CD14-positive monocyte (primary cell): ENCODE measurements at regions of chr6 and their contacts with region 1.

Region 1: DNA sequence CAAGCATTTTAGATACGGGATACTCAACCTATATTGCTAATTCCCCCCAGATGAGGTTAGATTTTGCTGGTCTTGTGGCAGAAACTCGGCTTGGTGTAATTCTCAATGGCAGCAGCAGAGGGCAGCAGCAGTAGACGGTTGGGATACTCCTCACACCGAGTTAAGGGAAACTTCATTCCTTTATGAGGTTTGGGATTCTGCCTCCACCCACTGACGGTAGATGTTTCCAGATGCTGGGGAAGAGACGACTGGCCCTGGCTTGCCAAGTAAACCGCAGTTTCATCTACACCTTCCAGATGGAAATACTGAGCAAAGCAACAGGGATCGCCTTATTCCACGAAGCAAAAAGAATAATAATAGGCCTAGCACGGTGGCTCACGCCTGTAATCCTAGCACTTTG is 8.2 kb upstream of the TBC1D7 start:
- DNase-seq: peak; percentile 55 to 68 (median 66)
- H3K4me3 ChIP-seq: no peak overlapping the region
- H3K4me3 Mint-ChIP-seq: no peak overlapping the region
- H3K27ac ChIP-seq: no peak overlapping the region
- H3K27ac Mint-ChIP-seq: peak overlapping the region in 3 of 7 donors; percentile 31 to 73 (median 35)
- H3K4me1 ChIP-seq: peaks cover 37 to 43% of the 10 kb centered on the region in 2 donors
- H3K4me1 Mint-ChIP-seq: peaks cover 42% of the 10 kb centered on the region
- H3K27me3 ChIP-seq: no peaks in the 10 kb centered on the region
- H3K27me3 Mint-ChIP-seq: peaks cover 0 to 1% (median 0%) of the 10 kb centered on the region in 3 donors
- CTCF ChIP-seq: peak; percentile 94

Region 2: DNA sequence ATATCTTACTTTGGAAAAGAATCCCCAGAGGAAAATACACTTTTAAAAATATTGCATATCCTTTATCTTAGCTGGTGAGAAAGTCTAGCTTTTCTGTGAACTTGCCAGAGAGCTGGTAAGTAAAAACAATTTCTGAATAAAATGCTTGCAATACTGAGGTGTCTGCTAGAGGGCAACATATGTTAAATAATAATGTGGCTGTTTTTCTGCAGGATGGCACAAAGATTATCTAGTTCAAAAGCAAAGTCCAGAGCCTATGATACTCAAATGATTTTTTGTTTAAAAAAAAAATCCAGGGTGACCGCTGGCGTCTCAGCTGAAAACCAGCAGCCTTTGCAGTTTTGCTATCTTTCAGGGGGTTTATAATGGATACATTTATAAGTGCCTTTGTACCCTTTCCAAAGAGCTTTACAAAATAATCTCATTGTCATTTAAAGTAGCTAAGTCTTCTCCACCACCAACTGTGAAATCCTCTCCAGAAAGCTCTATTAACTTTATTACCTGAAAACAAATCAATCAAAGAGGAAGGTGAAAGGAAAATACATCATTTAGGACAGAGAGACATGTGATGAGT is 425.1 kb before region 1 on chr6:
- intact Hi-C with region 1: loop called in 1 of 2 experiments (anchors 10 kb)
- DNase-seq: peak in 2 of 3 donors; percentile 9 to 34
- H3K4me3 ChIP-seq: no peak overlapping the region
- H3K4me3 Mint-ChIP-seq: no peak overlapping the region
- H3K27ac ChIP-seq: no peak overlapping the region
- H3K27ac Mint-ChIP-seq: no peak overlapping the region
- H3K4me1 ChIP-seq: peaks cover 11 to 16% of the 10 kb centered on the region in 2 donors
- H3K4me1 Mint-ChIP-seq: peaks cover 19% of the 10 kb centered on the region
- H3K27me3 ChIP-seq: no peaks in the 10 kb centered on the region
- H3K27me3 Mint-ChIP-seq: peaks cover 0 to 3% (median 0%) of the 10 kb centered on the region in 3 donors
- CTCF ChIP-seq: peak; percentile 54

Region 3: GRCh38 chr6:13375360-13375878 is 38.9 kb after region 1 on chr6:
- intact Hi-C with region 1: loop called in 1 of 2 experiments (anchors 5 kb)
- DNase-seq: no peak
- H3K4me3 ChIP-seq: no peak overlapping the region
- H3K4me3 Mint-ChIP-seq: no peak overlapping the region
- H3K27ac ChIP-seq: no peak overlapping the region
- H3K27ac Mint-ChIP-seq: no peak overlapping the region
- H3K4me1 ChIP-seq: peaks cover 6 to 14% of the 10 kb centered on the region in 2 donors
- H3K4me1 Mint-ChIP-seq: peaks cover 30% of the 10 kb centered on the region
- H3K27me3 ChIP-seq: no peaks in the 10 kb centered on the region
- H3K27me3 Mint-ChIP-seq: peaks cover 0 to 2% (median 1%) of the 10 kb centered on the region in 3 donors
- CTCF ChIP-seq: no peak

Region 4: GRCh38 chr6:13413900-13414555 is 77.5 kb after region 1 on chr6:
- intact Hi-C with region 1: no loop called
- DNase-seq: peak in 2 of 3 donors; percentile 43 to 50
- H3K4me3 ChIP-seq: no peak overlapping the region
- H3K4me3 Mint-ChIP-seq: no peak overlapping the region
- H3K27ac ChIP-seq: peak overlapping the region in 1 of 2 donors; percentile 63
- H3K27ac Mint-ChIP-seq: peak overlapping the region in 4 of 7 donors; percentile 26 to 74 (median 48)
- H3K4me1 ChIP-seq: peaks cover 34 to 41% of the 10 kb centered on the region in 2 donors
- H3K4me1 Mint-ChIP-seq: peaks cover 42% of the 10 kb centered on the region
- H3K27me3 ChIP-seq: no peaks in the 10 kb centered on the region
- H3K27me3 Mint-ChIP-seq: peaks cover 0 to 7% (median 2%) of the 10 kb centered on the region in 3 donors
- CTCF ChIP-seq: no peak

Region 5: DNA sequence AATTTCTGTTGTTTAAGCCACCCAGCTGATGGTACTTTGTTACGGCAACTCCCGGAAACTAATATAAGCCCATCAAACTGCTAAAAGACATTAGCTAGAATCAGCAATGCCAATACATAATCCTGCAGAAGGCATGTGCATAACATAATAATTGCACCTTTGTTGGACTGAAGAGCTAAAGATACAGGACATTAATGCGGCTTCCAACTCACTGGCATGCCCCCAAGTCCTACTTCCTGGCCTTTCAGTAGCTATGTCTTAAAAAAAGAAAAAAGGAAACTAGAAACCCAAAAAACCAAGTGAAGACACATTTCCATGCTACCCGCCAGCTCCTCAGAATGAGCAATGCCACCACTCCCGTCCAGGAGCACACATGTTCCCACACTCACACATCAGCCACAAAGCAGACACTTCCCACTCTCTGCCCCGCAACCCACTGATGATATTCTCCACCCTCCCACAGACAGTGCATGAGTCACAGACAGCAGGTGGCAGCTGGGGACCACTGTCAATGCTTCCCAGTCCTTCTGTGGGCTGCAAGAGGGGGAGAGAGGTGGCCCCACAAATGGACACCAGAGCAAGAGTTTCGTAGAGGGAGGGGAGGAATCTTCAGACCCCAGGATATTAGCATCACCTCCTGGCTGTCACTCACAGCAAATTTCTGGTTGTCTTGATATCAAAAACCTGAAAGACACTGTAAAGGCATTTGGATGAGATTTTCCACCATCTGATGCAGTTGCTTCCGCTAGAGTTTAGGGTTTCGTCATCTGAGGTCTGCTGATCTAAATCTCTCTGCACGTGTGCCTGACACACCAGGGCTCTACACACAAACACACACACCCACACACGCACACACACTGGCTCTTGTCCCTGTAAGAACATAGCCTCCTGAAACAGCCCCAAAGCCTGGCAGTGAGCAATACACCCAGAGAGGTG is 118.0 kb after region 1 on chr6:
- intact Hi-C with region 1: loop called in 1 of 2 experiments (anchors 10 kb)
- DNase-seq: peak; percentile 89 to 95 (median 94)
- H3K4me3 ChIP-seq: peak overlapping the region in 1 of 3 experiments; percentile 11
- H3K4me3 Mint-ChIP-seq: peak overlapping the region; percentile 61 to 72
- H3K27ac ChIP-seq: peak overlapping the region; percentile 71 to 83
- H3K27ac Mint-ChIP-seq: peak overlapping the region; percentile 89 to 99 (median 92)
- H3K4me1 ChIP-seq: peaks cover 19 to 20% of the 10 kb centered on the region in 2 donors
- H3K4me1 Mint-ChIP-seq: peaks cover 23% of the 10 kb centered on the region
- H3K27me3 ChIP-seq: no peaks in the 10 kb centered on the region
- H3K27me3 Mint-ChIP-seq: peaks cover 2% of the 10 kb centered on the region in 3 donors
- CTCF ChIP-seq: no peak

Region 6: DNA sequence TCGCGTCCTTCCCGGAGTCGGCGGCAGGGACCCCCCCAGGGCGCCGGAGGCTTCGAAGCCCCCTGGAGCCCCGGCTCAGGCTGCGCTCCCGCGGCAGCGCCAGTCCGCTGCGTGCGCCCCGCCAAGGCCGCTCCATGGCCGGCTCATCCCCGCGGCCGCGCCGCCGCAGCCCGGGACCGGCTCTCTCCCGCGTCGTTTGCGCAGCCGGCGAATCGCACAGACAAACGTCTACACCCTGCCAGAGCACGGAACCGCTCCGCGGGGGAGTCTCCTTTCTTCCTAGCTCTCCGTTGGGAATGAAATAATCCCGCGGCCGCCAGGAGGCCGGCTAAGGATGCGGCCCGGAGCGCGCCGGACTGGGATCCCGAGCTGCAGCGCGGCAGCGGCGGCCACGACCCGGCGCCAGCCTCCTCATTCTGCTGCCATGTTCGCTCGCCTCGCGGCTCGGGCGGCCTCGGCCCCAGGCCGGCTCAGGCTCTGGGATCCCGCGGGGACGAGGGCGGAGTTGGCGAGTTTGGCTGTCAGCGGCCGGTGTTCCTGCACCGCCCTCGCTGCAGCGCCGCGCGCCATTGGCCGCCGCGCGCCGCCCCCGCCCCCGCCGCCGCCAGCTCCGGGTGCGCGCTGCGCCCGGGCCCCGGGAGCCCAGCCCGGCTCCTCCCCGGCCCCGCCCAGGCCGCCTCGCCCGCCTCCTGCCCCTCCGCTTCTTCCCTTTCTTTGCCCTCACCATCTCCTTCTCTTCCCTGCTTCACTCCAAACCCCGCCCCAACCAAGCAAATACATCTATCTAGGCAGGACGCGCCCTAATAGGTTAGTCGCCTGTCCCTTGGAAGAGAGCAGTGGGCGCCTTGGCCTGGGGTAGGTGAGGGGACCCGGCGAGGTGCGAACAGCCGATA is 150.8 kb after region 1 on chr6 and contains the start of gene GFOD1:
- intact Hi-C with region 1: no loop called
- DNase-seq: peak; percentile 72 to 79 (median 77)
- H3K4me3 ChIP-seq: peak within 1 kb of the TSS; percentile 61 to 92 (median 64)
- H3K4me3 Mint-ChIP-seq: peak within 1 kb of the TSS; percentile 98 to 99
- H3K27ac ChIP-seq: peak within 1 kb of the TSS; percentile 75 to 86
- H3K27ac Mint-ChIP-seq: peak within 1 kb of the TSS; percentile 46 to 92 (median 86)
- H3K4me1 ChIP-seq: peaks cover 27 to 44% of the 10 kb centered on the region in 2 donors
- H3K4me1 Mint-ChIP-seq: peaks cover 47% of the 10 kb centered on the region
- H3K27me3 ChIP-seq: peaks cover 0 to 7% of the 10 kb centered on the region in 2 donors
- H3K27me3 Mint-ChIP-seq: peaks cover 3 to 14% (median 14%) of the 10 kb centered on the region in 3 donors
- CTCF ChIP-seq: peak; percentile 17
- polyA plus RNA-seq, gene GFOD1: 2.4 to 8.7 (median 2.4) TPM

Region 7: DNA sequence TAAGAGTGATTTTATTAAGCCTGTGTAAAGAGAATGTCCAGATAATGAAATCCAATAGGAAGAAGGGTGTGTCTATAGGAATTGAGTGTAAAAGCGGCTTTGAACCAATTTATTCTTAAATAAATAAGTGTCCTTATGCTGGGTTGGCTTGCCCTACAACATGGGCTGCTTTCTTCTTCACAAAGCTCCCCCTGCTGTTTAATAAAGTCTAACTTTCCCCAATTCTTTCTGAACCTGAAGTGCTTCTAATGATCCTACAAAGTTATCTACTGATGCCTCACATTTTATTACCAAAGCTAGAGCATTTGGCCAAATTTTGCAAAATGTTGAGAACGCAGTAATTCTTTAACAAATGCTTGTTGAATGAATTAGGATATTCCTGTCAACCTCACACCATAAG is 201.5 kb after region 1 on chr6:
- intact Hi-C with region 1: loop called (anchors 5 to 10 kb)
- DNase-seq: peak; percentile 21 to 49 (median 39)
- H3K4me3 ChIP-seq: no peak overlapping the region
- H3K4me3 Mint-ChIP-seq: no peak overlapping the region
- H3K27ac ChIP-seq: no peak overlapping the region
- H3K27ac Mint-ChIP-seq: no peak overlapping the region
- H3K4me1 ChIP-seq: no peaks in the 10 kb centered on the region
- H3K4me1 Mint-ChIP-seq: no peaks in the 10 kb centered on the region
- H3K27me3 ChIP-seq: no peaks in the 10 kb centered on the region
- H3K27me3 Mint-ChIP-seq: peaks cover 0 to 4% (median 3%) of the 10 kb centered on the region in 3 donors
- CTCF ChIP-seq: peak; percentile 37

Region 8: GRCh38 chr6:13574149-13574570 is 237.6 kb after region 1 on chr6:
- intact Hi-C with region 1: loop called (anchors 5 kb)
- DNase-seq: peak; percentile 85 to 89 (median 86)
- H3K4me3 ChIP-seq: peak overlapping the region; percentile 71 to 94 (median 87)
- H3K4me3 Mint-ChIP-seq: peak overlapping the region; percentile 96 to 97
- H3K27ac ChIP-seq: peak overlapping the region; percentile 92
- H3K27ac Mint-ChIP-seq: peak overlapping the region; percentile 95 to 99 (median 97)
- H3K4me1 ChIP-seq: peaks cover 11 to 16% of the 10 kb centered on the region in 2 donors
- H3K4me1 Mint-ChIP-seq: peaks cover 17% of the 10 kb centered on the region
- H3K27me3 ChIP-seq: no peaks in the 10 kb centered on the region
- H3K27me3 Mint-ChIP-seq: peaks cover 4 to 6% (median 4%) of the 10 kb centered on the region in 3 donors
- CTCF ChIP-seq: peak; percentile 40

Region 9: DNA sequence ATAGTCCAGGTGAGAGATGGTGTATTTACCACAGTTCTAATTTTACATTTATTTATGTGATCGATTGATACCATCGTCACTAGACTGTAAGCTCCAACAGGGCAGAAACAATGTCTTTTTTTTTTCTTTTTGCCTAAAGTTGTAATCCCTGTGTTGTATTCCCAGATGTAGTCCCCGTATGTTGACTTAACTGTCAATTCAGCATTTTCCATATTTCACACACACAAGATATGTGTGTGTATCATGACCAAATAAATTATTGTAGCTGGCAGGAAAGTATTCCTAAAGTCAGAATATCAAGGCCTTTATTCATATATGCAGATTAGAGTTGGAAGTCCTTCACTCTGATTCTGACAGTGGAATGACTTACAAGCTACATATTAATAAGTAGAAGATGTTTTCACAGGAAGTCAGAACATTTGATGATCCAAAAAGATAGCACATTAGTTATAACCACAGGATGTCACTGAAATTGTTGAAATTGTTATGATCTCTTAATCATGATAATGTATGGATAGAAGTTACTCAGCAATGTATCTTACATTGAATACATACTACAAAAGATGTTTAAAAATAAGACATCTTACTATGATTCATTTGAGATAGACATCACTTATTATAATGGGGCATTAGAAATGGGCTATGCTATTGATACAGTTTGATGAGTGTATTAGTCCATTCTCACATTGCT is 598.8 kb after region 1 on chr6:
- intact Hi-C with region 1: no loop called
- DNase-seq: no peak
- H3K4me3 ChIP-seq: no peak overlapping the region
- H3K4me3 Mint-ChIP-seq: no peak overlapping the region
- H3K27ac ChIP-seq: no peak overlapping the region
- H3K27ac Mint-ChIP-seq: no peak overlapping the region
- H3K4me1 ChIP-seq: no peaks in the 10 kb centered on the region
- H3K4me1 Mint-ChIP-seq: no peaks in the 10 kb centered on the region
- H3K27me3 ChIP-seq: peaks cover 0 to 14% of the 10 kb centered on the region in 2 donors
- H3K27me3 Mint-ChIP-seq: peaks cover 1 to 11% (median 6%) of the 10 kb centered on the region in 3 donors
- CTCF ChIP-seq: no peak